PC-3 (cell line): ENCODE measurements at regions of chr1 and their contacts with region 1.

Region 1: DNA sequence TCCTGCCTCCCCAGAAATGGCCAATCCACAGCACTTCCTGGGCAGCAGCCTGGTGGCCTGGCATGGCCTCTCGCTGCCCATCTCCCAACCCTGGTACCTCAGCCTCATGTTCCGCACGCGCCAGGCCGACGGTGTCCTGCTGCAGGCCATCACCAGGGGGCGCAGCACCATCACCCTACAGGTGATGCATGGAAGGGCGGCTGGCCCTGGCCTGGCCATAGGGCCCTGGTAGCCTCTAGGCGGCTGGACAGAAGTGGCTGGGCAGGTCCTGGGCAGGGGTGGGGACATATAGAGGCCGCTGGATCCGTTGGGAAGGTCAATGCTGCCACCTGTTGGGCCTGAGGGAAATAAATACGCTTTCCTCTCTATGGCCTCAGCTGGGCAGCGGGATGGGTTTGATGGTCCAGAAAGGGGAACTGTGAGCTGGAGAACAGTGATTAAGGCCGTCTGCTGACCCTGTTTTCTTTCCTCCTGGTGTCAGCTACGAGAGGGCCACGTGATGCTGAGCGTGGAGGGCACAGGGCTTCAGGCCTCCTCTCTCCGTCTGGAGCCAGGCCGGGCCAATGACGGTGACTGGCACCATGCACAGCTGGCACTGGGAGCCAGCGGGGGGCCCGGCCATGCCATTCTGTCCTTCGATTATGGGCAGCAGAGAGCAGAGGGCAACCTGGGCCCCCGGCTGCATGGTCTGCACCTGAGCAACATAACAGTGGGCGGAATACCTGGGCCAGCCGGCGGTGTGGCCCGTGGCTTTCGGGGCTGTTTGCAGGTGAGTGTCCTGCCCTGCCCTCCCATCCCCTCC is 14.5 kb downstream of the CELSR2 start:
- DNase-seq: peak; percentile 94
- ATAC-seq: peak; percentile 98
- H3K4me3 ChIP-seq: no peak overlapping the region
- H3K27ac ChIP-seq: no peak overlapping the region
- H3K4me1 ChIP-seq: peaks cover 10% of the 10 kb centered on the region
- H3K27me3 ChIP-seq: no peaks in the 10 kb centered on the region
- CTCF ChIP-seq: peak; percentile 98

Region 2: DNA sequence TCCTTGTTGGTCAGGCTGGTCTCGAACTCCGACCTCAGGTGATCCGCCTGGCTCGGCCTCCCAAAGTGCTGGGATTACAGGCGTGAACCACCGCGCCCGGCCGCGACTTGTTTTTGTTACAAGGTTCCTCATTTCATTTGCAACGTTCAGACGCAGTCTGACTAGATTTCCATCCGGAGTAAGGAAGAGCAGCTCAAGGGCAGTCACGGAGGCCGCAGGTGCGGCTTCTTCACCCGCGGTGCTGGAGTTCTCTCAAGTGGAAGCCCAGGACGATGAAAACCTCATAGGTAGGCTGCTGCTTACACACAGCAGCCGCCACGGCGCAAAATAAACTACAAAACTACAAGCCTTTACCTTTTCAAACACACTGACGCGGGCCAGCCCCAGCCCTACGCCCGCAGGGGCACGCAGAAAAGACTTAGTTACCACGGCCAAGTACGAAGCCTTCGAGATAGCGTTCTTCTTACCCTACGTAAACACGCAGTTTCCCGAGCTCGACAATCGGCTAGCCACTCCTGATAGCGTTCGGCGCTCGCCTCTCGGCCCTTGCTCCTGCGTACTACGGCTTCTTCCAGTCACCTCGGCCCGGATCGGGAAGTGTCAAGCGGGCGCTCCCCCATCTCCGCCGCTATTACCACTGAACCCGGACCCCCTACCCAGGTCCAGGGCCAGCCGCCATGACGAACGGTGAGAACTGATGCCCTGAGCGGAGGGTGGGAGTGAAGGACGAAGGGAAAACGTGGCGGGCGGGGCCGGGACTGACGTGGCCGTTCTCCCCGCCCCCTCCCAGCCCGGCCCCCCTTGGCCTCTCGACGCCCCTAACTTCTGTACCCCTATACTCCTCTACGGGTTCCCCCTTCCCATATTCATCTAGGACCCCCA is 173.4 kb before region 1 on chr1 and contains the start of gene TMEM167B:
- CTCF ChIA-PET with region 1: no interaction called
- POLR2A ChIA-PET with region 1: no interaction called
- intact Hi-C with region 1: loop called (anchors 1 kb)
- DNase-seq: peak; percentile 95
- ATAC-seq: peak; percentile 89
- H3K4me3 ChIP-seq: peak within 1 kb of the TSS; percentile 89
- H3K27ac ChIP-seq: peak within 1 kb of the TSS; percentile 80
- H3K4me1 ChIP-seq: peaks cover 17% of the 10 kb centered on the region
- H3K27me3 ChIP-seq: no peaks in the 10 kb centered on the region
- CTCF ChIP-seq: no peak
- total RNA-seq, gene TMEM167B: 21.0 and 27.7 TPM in 2 replicates

Region 3: DNA sequence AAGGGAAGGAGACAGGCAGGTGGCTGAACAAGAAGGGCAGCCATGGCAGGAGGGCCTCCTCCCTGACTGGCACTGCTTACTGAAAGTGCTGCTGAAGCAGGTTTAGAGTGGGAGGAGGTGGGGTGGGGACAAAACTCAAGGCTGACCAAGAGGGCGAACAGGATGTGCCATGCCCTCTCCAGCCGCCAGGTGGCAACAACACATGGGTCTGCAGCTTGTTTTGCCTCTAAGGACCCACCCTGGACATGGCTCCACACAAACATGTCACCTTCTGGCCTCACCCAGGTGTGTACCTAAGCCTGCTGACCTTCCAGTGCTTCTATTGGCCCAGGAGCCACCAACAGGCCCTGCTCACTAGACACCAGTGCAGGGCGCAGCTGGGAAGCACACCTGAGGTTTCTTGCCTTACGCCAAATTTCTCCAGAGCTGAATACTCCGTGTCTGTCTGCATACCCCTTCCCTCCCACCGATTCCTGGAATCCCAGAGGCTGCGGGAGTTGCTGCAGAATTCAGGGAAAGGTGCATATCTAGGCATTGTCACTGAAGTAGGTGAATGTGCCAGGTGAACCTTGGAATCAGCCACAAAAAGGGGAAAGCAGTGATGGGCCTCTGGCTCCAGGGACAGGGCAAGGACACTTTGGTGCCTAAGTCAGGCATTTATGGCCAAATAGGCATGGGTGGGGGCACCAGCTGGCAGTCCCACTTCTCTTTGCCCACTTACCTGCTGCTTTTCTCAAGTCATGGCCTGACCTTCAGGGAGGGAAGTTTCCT is 13.8 kb after region 1 on chr1:
- CTCF ChIA-PET with region 1: no interaction called
- POLR2A ChIA-PET with region 1: no interaction called
- intact Hi-C with region 1: loop called (anchors 1 kb)
- DNase-seq: peak; percentile 70
- ATAC-seq: peak; percentile 3; the same call in 1 of the 2 replicates
- H3K4me3 ChIP-seq: no peak overlapping the region
- H3K27ac ChIP-seq: peak overlapping the region; percentile 95
- H3K4me1 ChIP-seq: peaks cover 68% of the 10 kb centered on the region
- H3K27me3 ChIP-seq: no peaks in the 10 kb centered on the region
- CTCF ChIP-seq: peak; percentile 81